Vagina (tissue), 2 donors: ENCODE measurements at regions of chr4 and their contacts with region 1.

Region 1: GRCh38 chr4:99447079-99447478 is 11.9 kb upstream of the ADH7 start:
- DNase-seq: no peak
- H3K4me3 ChIP-seq: no peak overlapping the region
- H3K27ac ChIP-seq: no peak overlapping the region
- H3K4me1 ChIP-seq: no peaks in the 10 kb centered on the region
- H3K27me3 ChIP-seq: no peaks in the 10 kb centered on the region
- CTCF ChIP-seq: no peak
- POLR2A ChIP-seq: no peak

Region 2: GRCh38 chr4:100688368-100688767 is 1241.3 kb after region 1 on chr4:
- intact Hi-C with region 1: loop called (anchors 5 kb)
- DNase-seq: no peak
- H3K4me3 ChIP-seq: no peak overlapping the region
- H3K27ac ChIP-seq: no peak overlapping the region
- H3K4me1 ChIP-seq: no peaks in the 10 kb centered on the region
- H3K27me3 ChIP-seq: no peaks in the 10 kb centered on the region
- CTCF ChIP-seq: no peak
- POLR2A ChIP-seq: no peak